ENCODE measurements at regions of chr15 and their contacts with region 1.

Region 1: GRCh38 chr15:75201609-75202250 is at the start of gene C15orf39:
- DNase-seq: no peak
- ATAC-seq: peak; percentile 84
- H3K4me3 ChIP-seq: peak within 1 kb of the TSS; percentile 80 to 91
- H3K27ac ChIP-seq: peak within 1 kb of the TSS; percentile 86
- H3K4me1 ChIP-seq: peaks cover 43% of the 10 kb centered on the region
- H3K27me3 ChIP-seq: no peaks in the 10 kb centered on the region
- CTCF ChIP-seq: peak; percentile 99
- total RNA-seq, gene C15orf39: 17.6 TPM

Region 2: DNA sequence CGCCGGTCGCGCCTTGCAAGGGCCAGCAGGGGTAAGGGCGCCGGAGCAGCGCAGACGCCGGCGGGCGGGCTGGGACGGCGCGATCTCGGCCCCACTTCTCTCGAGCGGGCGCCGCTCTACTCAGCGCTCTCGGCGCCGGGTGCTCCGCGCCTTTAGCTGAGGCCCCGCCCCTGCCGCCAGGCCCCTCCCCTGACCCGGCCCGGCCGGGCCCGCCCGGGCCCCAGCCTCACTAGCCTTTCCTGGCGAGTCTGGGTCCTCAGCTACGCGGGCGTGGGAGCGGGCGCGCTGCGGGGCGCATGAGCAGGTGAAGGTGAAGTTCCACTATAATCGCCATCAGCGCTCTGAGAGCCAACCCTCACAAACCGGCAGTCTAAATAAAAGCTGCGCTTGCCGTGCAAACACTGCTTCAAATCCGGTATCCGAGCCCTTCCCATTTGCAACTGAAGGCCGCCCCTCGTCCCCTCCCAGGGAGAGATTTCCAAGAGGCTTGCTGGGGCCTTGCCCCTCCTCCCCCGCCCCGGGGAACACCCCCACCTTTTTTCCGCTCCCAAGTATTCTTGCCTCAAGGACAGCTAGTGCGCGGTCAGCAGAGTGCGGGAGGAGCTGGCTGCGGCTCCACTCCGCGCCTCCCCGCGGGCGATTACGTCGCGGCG is 245.0 kb before region 1 on chr15 and contains the start of gene RPP25:
- CTCF ChIA-PET with region 1: interaction called, 3 read pairs
- POLR2A ChIA-PET with region 1: interaction called, 3 read pairs
- in situ Hi-C with region 1: no loop called
- intact Hi-C with region 1: loop called (anchors 5 kb)
- DNase-seq: peak; percentile 80
- ATAC-seq: peak; percentile 90
- H3K4me3 ChIP-seq: peak within 1 kb of the TSS; percentile 79 to 96
- H3K27ac ChIP-seq: peak within 1 kb of the TSS; percentile 96
- H3K4me1 ChIP-seq: peaks cover 36% of the 10 kb centered on the region
- H3K27me3 ChIP-seq: no peaks in the 10 kb centered on the region
- CTCF ChIP-seq: no peak
- total RNA-seq, gene RPP25: 40.1 TPM

Region 3: GRCh38 chr15:74988007-74988800 is 213.5 kb before region 1 on chr15:
- CTCF ChIA-PET with region 1: no interaction called
- POLR2A ChIA-PET with region 1: no interaction called
- in situ Hi-C with region 1: no loop called
- intact Hi-C with region 1: no loop called
- DNase-seq: no peak
- ATAC-seq: peak; percentile 97
- H3K4me3 ChIP-seq: no peak overlapping the region
- H3K27ac ChIP-seq: no peak overlapping the region
- H3K4me1 ChIP-seq: no peaks in the 10 kb centered on the region
- H3K27me3 ChIP-seq: peaks cover 5% of the 10 kb centered on the region; the same call in 1 of the 2 replicates
- CTCF ChIP-seq: peak; percentile 88

Region 4: DNA sequence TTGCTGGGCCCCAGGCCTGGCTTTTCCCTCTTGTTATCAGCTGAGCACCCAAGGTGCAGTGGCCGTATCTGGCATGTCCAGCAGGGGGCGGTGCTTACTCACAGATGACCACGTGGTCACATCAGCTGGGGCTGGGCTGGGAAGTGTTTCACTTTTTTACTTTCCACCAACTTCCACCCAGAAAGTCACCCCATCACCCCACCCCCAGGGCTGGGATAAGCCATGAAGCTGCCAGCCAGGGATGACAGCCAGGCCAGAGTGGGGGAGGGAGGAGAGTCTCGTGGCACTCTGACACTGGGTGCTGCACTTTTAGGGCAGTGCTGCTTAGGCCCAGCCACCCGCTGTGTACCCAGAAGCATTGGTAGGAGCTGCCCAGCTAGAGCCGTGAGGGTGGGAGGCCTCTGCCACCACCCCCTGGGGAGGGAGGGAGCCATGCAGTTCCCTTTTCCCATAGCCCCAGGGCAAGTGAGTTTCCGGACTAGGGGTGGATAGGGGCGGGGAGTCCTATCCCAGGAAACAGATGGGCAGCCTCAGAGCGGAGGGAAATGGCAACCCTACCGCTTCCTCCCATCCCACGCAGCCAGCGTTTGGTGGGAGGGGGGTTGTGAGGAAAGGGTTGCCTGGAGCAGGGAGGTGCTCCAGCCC is 172.2 kb before region 1 on chr15:
- CTCF ChIA-PET with region 1: interaction called, 11 read pairs
- POLR2A ChIA-PET with region 1: no interaction called
- in situ Hi-C with region 1: no loop called
- intact Hi-C with region 1: loop called (anchors 2 kb)
- DNase-seq: no peak
- ATAC-seq: peak; percentile 90
- H3K4me3 ChIP-seq: no peak overlapping the region
- H3K27ac ChIP-seq: peak overlapping the region; percentile 49
- H3K4me1 ChIP-seq: peaks cover 10% of the 10 kb centered on the region
- H3K27me3 ChIP-seq: no peaks in the 10 kb centered on the region
- CTCF ChIP-seq: peak; percentile 94

Region 5: GRCh38 chr15:75065851-75066509 is 135.8 kb before region 1 on chr15:
- CTCF ChIA-PET with region 1: no interaction called
- POLR2A ChIA-PET with region 1: interaction called, 10 read pairs
- in situ Hi-C with region 1: no loop called
- intact Hi-C with region 1: no loop called
- DNase-seq: no peak
- ATAC-seq: no peak
- H3K4me3 ChIP-seq: no peak overlapping the region
- H3K27ac ChIP-seq: no peak overlapping the region
- H3K4me1 ChIP-seq: no peaks in the 10 kb centered on the region; the same call in 1 of the 2 replicates
- H3K27me3 ChIP-seq: no peaks in the 10 kb centered on the region
- CTCF ChIP-seq: no peak

Region 6: GRCh38 chr15:75153565-75154276 is 48.0 kb before region 1 on chr15:
- CTCF ChIA-PET with region 1: no interaction called
- POLR2A ChIA-PET with region 1: no interaction called
- in situ Hi-C with region 1: no loop called
- intact Hi-C with region 1: no loop called
- DNase-seq: no peak
- ATAC-seq: no peak
- H3K4me3 ChIP-seq: no peak overlapping the region
- H3K27ac ChIP-seq: no peak overlapping the region
- H3K4me1 ChIP-seq: no peaks in the 10 kb centered on the region
- H3K27me3 ChIP-seq: no peaks in the 10 kb centered on the region
- CTCF ChIP-seq: no peak

Region 7: GRCh38 chr15:75380773-75381172 is 179.0 kb after region 1 on chr15:
- CTCF ChIA-PET with region 1: no interaction called
- POLR2A ChIA-PET with region 1: no interaction called
- in situ Hi-C with region 1: no loop called
- intact Hi-C with region 1: no loop called
- DNase-seq: no peak
- ATAC-seq: no peak
- H3K4me3 ChIP-seq: no peak overlapping the region
- H3K27ac ChIP-seq: no peak overlapping the region
- H3K4me1 ChIP-seq: no peaks in the 10 kb centered on the region
- H3K27me3 ChIP-seq: no peaks in the 10 kb centered on the region
- CTCF ChIP-seq: no peak

Region 8: DNA sequence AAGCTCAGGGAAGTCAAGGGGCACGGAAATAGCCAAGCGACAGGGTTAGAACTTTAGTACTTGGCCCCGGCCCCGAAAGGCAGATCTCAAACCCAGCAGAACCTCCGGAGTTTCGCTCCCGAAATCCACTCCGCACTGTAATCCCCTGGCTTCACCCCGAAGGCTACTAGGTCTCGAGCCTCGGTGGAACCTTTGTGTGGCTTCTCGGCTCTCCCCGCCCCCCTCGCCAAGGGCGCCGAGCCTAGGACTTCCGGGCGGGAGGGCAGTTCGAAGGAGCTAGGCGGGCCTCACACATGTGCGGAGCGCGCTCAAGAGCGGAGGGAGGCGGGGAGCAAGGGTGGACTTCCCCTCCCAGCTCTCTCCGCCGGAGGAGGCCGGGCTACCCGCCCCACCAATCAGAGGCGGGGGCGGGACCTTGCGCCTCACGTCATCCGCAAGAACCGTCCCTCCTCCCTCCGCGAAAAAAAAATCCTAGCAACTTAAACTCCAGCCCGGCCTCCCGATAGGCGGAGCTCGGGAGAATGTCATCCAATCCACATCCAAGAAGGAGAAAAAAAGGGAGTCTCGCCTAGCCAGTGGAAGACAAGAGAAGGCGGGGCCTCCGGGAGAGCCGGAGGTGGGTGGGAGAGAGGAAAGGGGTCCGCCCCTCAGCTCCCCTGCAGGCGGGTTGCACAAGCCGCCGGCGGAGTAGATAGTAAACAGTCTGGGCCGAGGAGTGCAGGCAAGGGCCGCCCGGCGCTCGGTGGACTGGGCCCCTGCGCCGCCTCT is 252.2 kb after region 1 on chr15:
- CTCF ChIA-PET with region 1: no interaction called
- POLR2A ChIA-PET with region 1: no interaction called
- in situ Hi-C with region 1: no loop called
- intact Hi-C with region 1: no loop called
- DNase-seq: peak; percentile 100
- ATAC-seq: peak; percentile 59
- H3K4me3 ChIP-seq: peak overlapping the region; percentile 98
- H3K27ac ChIP-seq: peak overlapping the region; percentile 99
- H3K4me1 ChIP-seq: peaks cover 18% of the 10 kb centered on the region
- H3K27me3 ChIP-seq: no peaks in the 10 kb centered on the region
- CTCF ChIP-seq: no peak

Measured in Panc1 (cell line).